ENCODE measurements at regions of chr19 and their contacts with region 1.

Region 1: GRCh38 chr19:52942386-52943133 is 19.3 kb upstream of the ZNF888 start:
- DNase-seq: peak; percentile 81 to 98
- H3K4me3 ChIP-seq: peak overlapping the region; percentile 59 to 78
- H3K27ac ChIP-seq: peak overlapping the region; percentile 84 to 86
- H3K4me1 ChIP-seq: peaks cover 0 to 4% of the 10 kb centered on the region in 2 donors
- H3K27me3 ChIP-seq: no peaks in the 10 kb centered on the region
- CTCF ChIP-seq: no peak

Region 2: DNA sequence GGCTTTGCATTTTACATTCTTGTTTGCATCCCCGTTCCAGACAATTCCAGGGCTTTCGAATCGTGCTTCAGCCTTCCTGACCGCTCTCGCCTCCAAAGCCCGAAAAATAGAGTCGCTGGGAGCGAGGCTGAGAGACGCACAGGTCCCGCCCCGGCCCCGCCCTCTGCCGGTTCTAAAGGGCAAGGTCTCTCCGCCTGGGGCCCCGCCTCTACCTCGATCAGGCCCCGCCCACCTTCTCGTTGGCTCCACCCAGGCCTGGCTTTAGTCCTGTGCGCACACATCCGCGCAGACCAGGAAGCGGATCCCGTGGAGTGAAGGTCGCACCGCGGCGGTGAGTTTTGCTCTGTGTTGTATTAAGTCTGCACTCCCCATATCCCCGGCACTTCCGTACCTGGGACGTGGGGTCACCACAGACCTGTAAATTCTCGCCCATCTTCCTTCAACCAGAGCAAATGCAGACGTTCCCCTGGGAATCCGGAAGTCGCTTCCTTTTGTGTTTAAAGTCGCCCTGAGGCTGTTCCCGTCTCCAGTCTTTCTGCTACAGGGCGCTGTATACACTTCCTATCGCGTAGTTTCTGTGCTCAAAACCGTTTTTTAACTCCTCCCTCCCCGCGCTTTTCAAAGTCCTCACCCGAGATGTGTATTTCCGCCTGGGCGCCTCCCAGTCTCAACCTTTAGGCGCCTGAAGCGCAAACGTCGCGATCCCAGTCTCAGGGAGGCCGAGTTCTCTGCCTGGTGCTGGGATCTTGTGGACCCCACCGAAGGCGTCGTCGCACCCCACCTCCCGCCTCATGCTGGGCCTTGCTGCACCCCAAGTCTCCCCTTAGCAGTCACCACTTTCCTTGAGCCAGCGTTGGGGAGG is 372.3 kb before region 1 on chr19 and contains the start of gene ZNF701:
- intact Hi-C with region 1: loop called (anchors 1 kb)
- DNase-seq: peak; percentile 81 to 98
- H3K4me3 ChIP-seq: peak within 1 kb of the TSS; percentile 80 to 82
- H3K27ac ChIP-seq: peak within 1 kb of the TSS; percentile 75 to 86
- H3K4me1 ChIP-seq: peaks cover 0 to 5% of the 10 kb centered on the region in 2 donors
- H3K27me3 ChIP-seq: no peaks in the 10 kb centered on the region
- CTCF ChIP-seq: peak in 2 of 3 experiments; percentile 26 to 48
- total RNA-seq, gene ZNF701: 13.2 TPM

Region 3: GRCh38 chr19:52786457-52787359 is 155.9 kb before region 1 on chr19 and contains the start of gene ZNF600:
- intact Hi-C with region 1: loop called (anchors 10 kb)
- DNase-seq: peak; percentile 77 to 95
- H3K4me3 ChIP-seq: peak within 1 kb of the TSS; percentile 48 to 84
- H3K27ac ChIP-seq: peak within 1 kb of the TSS; percentile 79 to 85
- H3K4me1 ChIP-seq: no peaks in the 10 kb centered on the region
- H3K27me3 ChIP-seq: no peaks in the 10 kb centered on the region
- CTCF ChIP-seq: peak; percentile 19 to 40 (median 38)
- total RNA-seq, gene ZNF600: 4.8 TPM

Region 4: DNA sequence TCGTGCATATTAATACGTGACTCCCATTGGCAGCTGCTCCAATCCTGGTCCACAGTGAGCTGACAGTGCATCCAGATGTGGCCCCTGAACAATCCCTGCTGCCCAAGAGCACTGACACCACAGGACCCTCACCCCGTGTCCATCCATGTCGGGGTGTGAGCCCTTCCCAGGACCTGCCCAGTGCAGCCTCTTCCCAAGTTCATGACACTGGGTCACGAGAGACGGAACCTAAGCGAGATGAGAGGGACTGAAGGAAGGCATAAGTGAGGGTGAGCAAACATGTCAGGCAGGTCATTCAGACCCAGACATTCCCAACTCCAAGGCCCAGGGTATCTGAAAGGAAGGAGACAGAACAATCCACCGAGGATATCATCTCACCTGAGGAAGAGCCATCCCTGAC is 88.7 kb before region 1 on chr19:
- intact Hi-C with region 1: loop called (anchors 5 kb)
- DNase-seq: no peak
- H3K4me3 ChIP-seq: no peak overlapping the region
- H3K27ac ChIP-seq: no peak overlapping the region
- H3K4me1 ChIP-seq: peaks cover 0 to 3% of the 10 kb centered on the region in 2 donors
- H3K27me3 ChIP-seq: no peaks in the 10 kb centered on the region
- CTCF ChIP-seq: no peak

Region 5: GRCh38 chr19:52897144-52897935 is 45.2 kb before region 1 on chr19 and contains the start of gene ZNF320:
- intact Hi-C with region 1: loop called (anchors 1 kb)
- DNase-seq: peak; percentile 92 to 98
- H3K4me3 ChIP-seq: peak within 1 kb of the TSS; percentile 77 to 93
- H3K27ac ChIP-seq: peak within 1 kb of the TSS; percentile 92 to 94
- H3K4me1 ChIP-seq: peaks cover 5 to 10% of the 10 kb centered on the region in 2 donors
- H3K27me3 ChIP-seq: no peaks in the 10 kb centered on the region
- CTCF ChIP-seq: no peak
- total RNA-seq, gene ZNF320: not detected

Region 6: DNA sequence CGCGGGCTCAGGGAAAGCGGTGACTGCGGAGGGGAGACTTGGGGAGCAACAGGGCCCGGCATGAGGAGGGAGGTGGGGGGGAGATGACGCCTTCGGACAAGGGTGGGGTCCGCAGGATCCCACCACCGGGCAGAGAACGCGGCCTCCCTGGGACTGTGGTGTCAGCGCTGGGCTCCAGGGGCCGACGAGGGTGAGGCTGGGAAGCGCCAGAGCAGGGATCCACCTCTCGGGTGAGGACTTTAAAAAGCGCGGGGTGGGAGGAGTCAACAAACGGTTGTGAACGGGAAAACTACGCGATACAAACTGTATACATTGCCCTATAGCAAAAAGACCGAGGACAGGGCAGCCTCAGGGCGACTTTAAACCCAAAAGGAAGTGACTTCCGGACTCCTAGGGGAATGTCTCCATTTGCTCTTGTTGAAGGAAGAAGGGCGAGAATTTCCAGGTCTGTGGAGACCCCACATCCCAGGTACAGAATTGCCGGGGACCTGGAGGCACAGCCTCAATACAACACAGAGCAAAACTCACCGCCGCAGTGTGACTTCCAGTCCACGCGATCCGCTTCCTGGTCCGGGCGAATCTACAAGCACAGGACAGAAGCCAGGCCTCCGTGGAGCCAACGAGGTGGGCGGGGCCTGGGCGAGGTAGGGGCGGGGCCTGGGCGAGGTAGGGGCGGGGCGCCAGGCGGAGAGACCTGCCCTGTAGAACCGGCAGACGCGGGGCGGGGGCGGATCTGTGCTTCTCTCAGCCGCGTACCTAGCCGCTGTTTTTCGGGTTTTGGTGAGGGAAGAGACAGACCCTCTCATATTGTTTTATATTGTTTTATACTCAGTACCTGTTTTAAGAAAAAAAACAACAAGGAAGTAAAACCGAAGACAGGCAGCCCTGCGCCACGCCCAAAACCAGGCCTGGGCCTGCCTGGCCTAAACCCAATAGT is 19.5 kb before region 1 on chr19 and contains the start of gene ZNF888:
- intact Hi-C with region 1: loop called (anchors 1 kb)
- DNase-seq: peak; percentile 70 to 96
- H3K4me3 ChIP-seq: peak within 1 kb of the TSS; percentile 79 to 83
- H3K27ac ChIP-seq: peak within 1 kb of the TSS; percentile 88 to 91
- H3K4me1 ChIP-seq: peaks cover 0 to 8% of the 10 kb centered on the region in 2 donors
- H3K27me3 ChIP-seq: no peaks in the 10 kb centered on the region
- CTCF ChIP-seq: no peak
- total RNA-seq, gene ZNF888: 0.43 TPM

Region 7: GRCh38 chr19:52962394-52963246 is 20.1 kb after region 1 on chr19 and contains the start of gene ZNF816:
- intact Hi-C with region 1: loop called (anchors 1 kb)
- DNase-seq: peak; percentile 92 to 99
- H3K4me3 ChIP-seq: peak within 1 kb of the TSS; percentile 71 to 74
- H3K27ac ChIP-seq: peak within 1 kb of the TSS; percentile 81 to 87
- H3K4me1 ChIP-seq: peaks cover 0 to 9% of the 10 kb centered on the region in 2 donors
- H3K27me3 ChIP-seq: no peaks in the 10 kb centered on the region
- CTCF ChIP-seq: no peak
- total RNA-seq, gene ZNF816: 7.1 TPM

Region 8: GRCh38 chr19:53158119-53158656 is 215.6 kb after region 1 on chr19:
- intact Hi-C with region 1: no loop called
- DNase-seq: peak in 1 of 2 donors; percentile 65
- H3K4me3 ChIP-seq: peak overlapping the region; percentile 78 to 86
- H3K27ac ChIP-seq: peak overlapping the region; percentile 78 to 82
- H3K4me1 ChIP-seq: no peaks in the 10 kb centered on the region
- H3K27me3 ChIP-seq: no peaks in the 10 kb centered on the region
- CTCF ChIP-seq: no peak

Measured in ascending aorta (tissue), 2 donors.